Cardiac septum (tissue), 1 donor: ENCODE measurements at regions of chr6 and their contacts with region 1.

Region 1: GRCh38 chr6:35583893-35584688 is 71.4 kb upstream of the TULP1 start:
- DNase-seq: peak; percentile 78

Region 2: DNA sequence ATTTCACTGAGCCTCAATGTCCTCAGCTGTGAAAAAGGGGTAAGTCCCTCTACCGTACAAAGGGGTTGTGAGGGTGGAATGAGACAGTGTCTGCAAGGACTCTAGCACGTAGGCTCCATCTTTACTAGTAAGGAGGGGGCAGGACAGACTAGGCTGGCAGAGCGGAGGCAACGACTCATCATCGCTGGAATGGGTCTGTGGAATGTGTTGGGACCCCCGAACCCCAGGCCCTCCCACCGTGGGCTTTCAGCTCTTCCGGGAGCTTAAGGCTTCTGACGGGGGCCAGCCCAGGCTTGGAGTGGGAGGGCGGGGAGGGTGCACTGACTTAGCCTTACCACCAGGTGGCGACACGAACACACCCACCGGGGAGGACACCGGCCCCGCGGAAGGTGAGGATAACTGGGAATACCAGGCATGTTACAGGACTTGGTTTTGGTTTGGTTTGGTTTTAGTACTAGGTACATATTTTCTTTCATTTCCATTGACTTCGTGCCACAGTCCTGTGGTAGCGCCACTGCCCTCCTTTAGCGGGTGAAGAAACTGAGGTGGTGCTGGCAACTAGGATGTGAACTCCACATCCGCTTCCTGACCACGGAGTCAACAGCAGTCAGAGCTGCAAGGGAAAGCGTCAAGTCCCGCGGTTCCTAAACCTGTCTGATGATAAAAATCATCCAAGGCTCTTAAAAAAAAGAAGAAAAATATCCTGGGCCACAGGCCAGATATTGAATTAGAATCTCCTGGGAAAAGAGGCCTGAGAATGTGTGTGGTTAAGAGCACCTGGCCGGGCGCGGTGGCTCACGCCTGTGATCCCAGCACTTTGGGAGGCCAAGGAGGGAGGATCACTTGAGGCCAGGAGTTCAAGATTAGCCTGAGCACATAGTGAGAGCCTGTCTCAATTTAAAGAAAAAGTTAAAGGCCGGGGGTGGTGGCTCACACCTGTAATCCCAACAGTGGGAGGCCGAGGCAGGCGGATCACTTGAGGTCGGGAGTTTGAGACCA is 61.1 kb before region 1 on chr6:
- intact Hi-C with region 1: loop called (anchors 5 kb)
- DNase-seq: peak; percentile 86

Region 3: GRCh38 chr6:35601331-35602132 is 17.4 kb after region 1 on chr6:
- intact Hi-C with region 1: no loop called
- DNase-seq: peak; percentile 77

Region 4: GRCh38 chr6:35624341-35625070 is 40.4 kb after region 1 on chr6:
- intact Hi-C with region 1: loop called (anchors 5 kb)
- DNase-seq: no peak

Region 5: DNA sequence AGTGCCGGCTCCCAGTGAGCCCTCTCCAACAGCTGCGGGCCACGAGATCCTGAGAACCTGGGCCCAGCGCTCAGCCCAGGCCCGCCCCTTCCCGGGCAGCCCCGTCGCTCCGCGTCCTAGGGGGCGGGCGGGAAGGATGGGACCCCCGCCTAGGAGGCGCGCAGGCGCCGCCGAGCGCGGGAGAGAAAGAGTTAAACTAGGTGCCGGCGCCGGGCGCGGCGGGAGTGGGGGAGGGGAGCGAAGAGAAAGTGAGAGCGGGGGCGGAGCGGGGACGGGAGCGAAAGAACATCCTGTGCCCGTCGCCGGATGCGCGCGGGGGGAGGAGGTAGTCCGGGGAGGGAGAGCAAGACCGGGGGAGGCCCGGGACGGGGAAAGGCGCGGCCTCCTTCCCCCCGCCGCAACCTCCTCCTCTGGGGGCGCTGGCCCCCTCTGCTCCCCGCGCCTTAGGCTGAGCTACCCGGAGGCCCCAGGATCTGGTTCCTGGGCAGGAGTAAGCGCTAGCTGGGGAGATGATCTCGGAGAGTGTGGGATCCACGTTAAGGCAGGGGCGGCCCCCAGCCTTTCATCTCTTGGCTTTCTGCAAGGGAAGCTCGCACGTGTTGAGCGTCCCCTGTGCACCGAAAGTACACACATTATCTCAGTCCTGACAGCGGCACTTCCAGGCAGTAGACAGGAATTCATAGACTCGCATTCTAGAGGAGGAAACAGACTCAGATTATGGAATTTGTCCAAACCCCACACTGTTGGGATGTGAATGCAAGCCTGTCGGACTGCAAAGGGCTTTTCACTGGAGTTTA is 147.8 kb after region 1 on chr6:
- intact Hi-C with region 1: loop called (anchors 1 kb)
- DNase-seq: peak; percentile 99

Region 6: DNA sequence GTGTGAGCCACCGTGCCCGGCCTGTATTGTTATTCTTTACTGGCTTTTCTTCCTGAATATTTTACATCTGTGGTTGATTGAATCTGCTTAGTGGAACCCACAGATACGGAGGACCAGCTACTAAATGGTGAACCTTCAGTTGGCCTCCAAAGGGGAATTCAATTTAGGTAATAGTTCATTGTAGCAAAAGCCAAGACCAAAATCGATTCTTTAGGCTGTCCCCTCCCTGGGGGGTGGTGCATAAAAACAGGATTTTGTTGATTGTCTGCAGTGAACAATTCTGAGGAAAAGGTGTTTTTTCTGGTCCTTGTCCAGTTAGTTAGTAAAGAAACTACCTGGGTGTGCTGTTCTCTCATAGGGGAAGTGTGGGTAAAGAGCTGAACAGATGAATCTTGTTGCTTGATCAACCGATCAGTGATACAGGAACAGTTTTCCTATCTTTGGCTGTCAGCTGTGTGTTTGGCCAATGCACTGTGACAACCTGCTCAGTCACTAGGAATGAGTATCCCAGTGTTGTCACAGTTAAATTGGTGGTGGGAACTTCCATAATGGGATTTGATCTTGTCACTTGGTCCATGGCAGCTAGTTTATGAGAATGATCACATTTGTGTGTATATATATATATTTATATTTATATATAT is 240.6 kb after region 1 on chr6:
- intact Hi-C with region 1: no loop called
- DNase-seq: no peak